BJ (cell line): ENCODE measurements at regions of chr3 and their contacts with region 1.

Region 1: GRCh38 chr3:128680602-128681368 is 30.2 kb upstream of the RPN1 start:
- DNase-seq: peak; percentile 89
- H3K4me3 ChIP-seq: peak overlapping the region; percentile 62
- H3K27me3 ChIP-seq: no peaks in the 10 kb centered on the region
- CTCF ChIP-seq: peak; percentile 99

Region 2: GRCh38 chr3:128190501-128190900 is 490.3 kb before region 1 on chr3:
- CTCF ChIA-PET with region 1: no interaction called
- POLR2A ChIA-PET with region 1: no interaction called
- DNase-seq: no peak
- H3K4me3 ChIP-seq: no peak overlapping the region
- H3K27me3 ChIP-seq: no peaks in the 10 kb centered on the region
- CTCF ChIP-seq: no peak

Region 3: DNA sequence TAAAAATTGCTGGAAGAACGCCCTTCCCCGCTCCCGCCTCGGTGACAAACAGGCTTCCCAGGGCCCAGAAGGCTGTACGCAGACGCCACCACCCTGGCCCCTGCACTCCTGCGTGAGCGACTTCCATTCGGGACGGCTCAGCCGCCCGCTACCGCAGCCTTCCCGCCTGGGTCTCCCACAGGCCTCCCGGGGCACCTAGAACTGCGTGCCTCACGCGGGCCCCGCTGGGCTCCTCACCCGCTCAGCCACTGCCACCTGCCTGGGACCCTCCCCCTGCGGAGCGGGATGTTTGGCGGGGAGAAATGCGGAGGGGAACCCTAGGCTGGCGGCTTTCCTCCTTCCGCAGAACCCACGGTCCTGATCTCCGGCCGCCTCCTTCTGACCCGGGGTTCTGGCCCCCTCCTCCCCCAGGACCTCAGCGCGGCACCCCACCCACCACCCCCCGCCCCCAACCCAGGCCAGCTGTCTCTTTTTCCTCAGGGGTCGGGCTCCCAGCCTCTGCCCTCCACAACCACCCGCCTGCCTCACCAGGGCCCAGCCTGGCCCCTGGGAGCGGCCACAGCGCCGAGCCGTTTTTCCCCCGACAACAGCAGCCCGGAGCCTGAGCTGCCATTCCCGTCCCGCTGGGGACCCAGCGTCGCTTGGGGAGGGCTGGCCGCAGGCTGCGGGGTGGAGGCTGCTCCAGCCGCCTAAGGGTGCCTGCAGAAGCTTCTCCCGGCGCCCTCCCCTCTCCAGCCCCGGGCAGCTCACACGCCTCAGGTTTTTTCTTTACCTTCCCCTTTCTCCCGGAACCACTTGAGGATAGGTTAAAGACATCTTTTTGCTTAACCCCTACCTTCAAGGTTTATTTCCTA is 17.7 kb after region 1 on chr3:
- CTCF ChIA-PET with region 1: interaction called, 34 read pairs
- POLR2A ChIA-PET with region 1: interaction called, 3 read pairs
- DNase-seq: no peak
- H3K4me3 ChIP-seq: peak overlapping the region; percentile 49
- H3K27me3 ChIP-seq: no peaks in the 10 kb centered on the region
- CTCF ChIP-seq: no peak

Region 4: GRCh38 chr3:128730471-128730870 is 49.7 kb after region 1 on chr3:
- CTCF ChIA-PET with region 1: interaction called, 12 read pairs
- POLR2A ChIA-PET with region 1: no interaction called
- DNase-seq: no peak
- H3K4me3 ChIP-seq: no peak overlapping the region
- H3K27me3 ChIP-seq: no peaks in the 10 kb centered on the region
- CTCF ChIP-seq: no peak

Region 5: DNA sequence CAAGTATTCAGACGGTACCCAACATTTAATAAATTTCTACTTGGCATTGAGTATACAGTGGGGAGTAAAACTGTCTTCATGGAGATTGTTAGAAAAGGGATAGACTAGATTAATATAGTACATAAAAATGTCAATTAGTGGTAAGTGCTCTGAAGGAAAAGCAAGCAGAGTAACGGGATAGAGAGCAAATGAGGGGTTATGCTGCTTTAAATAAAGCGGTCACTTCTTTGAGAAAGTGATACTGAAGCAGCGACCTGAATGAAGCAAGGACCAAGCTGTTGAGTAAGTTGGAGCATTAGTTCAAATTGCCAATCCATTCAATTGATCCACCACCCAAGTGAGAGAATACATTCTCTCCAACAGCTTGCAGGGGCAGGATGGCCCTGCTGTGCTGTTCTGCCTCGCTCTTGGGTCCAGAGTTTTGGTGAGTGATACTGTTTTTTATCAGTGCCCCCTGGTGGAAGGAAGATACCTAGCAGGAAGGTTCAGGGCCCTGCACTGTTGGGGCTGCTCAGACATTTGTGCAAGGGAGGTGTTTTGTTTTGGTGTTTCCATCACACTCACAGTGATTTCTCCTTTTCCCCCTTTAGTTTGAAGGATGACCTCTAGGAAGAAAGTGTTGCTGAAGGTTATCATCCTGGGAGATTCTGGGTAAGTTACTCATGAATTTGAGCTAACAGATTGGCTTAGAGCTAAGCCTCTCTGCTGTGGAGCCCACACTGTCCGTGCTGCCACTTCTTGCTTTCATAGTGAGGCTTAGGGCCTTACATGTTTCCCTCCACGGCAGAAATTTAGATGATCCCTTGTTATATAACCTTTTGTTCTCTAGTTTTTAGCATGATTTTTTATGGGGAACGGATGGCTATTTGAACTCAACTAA is 114.2 kb after region 1 on chr3:
- CTCF ChIA-PET with region 1: interaction called, 51 read pairs
- POLR2A ChIA-PET with region 1: interaction called, 4 read pairs
- DNase-seq: no peak
- H3K4me3 ChIP-seq: no peak overlapping the region
- H3K27me3 ChIP-seq: no peaks in the 10 kb centered on the region
- CTCF ChIP-seq: peak; percentile 79

Region 6: GRCh38 chr3:128800241-128801187 is 119.7 kb after region 1 on chr3:
- CTCF ChIA-PET with region 1: interaction called, 51 read pairs
- POLR2A ChIA-PET with region 1: interaction called, 4 read pairs
- DNase-seq: no peak
- H3K4me3 ChIP-seq: no peak overlapping the region
- H3K27me3 ChIP-seq: no peaks in the 10 kb centered on the region
- CTCF ChIP-seq: no peak

Region 7: GRCh38 chr3:128845778-128846485 is 165.1 kb after region 1 on chr3:
- CTCF ChIA-PET with region 1: interaction called, 28 read pairs
- POLR2A ChIA-PET with region 1: no interaction called
- DNase-seq: no peak
- H3K4me3 ChIP-seq: peak overlapping the region; percentile 36
- H3K27me3 ChIP-seq: no peaks in the 10 kb centered on the region
- CTCF ChIP-seq: peak; percentile 60

Region 8: DNA sequence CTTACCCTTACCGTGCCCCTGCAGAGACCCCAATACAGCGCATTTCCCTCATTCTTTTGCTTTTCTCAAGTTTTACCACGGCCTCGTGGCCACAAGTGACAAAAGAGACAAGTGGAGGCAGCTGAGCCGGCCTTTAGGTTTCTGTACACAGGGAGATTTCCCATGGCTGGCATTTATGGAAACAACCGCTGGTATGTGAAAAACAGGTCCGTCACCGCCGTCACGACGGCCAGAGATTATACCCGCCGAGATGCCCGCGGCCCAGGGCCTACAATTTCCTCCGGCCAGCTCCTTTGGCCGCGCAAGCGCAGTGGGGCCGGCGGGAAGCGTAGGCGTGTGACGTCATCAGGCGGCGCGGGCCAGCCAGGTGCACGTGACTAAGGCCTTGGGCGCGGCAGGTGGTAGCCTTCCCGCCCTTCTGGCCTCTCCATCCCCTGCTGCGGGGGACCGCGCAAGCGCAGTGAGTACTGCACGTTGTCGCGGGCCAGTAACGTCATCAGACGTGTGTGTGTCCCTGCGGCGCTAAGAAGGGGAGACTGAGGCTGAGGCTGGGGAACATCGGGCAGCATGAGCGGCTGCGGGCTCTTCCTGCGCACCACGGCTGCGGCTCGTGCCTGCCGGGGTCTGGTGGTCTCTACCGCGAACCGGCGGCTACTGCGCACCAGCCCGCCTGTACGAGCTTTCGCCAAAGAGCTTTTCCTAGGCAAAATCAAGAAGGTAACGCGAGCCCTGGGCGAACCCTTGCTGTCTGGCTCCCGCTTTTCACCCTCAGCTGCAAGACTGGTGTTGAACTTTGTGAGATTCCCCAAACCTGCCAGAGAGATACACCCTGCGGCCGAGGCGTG is 198.6 kb after region 1 on chr3 and contains the start of gene ACAD9:
- CTCF ChIA-PET with region 1: interaction called, 19 read pairs
- POLR2A ChIA-PET with region 1: interaction called, 3 read pairs
- DNase-seq: peak; percentile 89
- H3K4me3 ChIP-seq: peak within 1 kb of the TSS; percentile 89
- H3K27me3 ChIP-seq: no peaks in the 10 kb centered on the region
- CTCF ChIP-seq: no peak
- polyA plus RNA-seq, gene ACAD9: 29.4 and 48.5 TPM in 2 replicates